ENCODE measurements at regions of chr6 and their contacts with region 1.

Region 1: DNA sequence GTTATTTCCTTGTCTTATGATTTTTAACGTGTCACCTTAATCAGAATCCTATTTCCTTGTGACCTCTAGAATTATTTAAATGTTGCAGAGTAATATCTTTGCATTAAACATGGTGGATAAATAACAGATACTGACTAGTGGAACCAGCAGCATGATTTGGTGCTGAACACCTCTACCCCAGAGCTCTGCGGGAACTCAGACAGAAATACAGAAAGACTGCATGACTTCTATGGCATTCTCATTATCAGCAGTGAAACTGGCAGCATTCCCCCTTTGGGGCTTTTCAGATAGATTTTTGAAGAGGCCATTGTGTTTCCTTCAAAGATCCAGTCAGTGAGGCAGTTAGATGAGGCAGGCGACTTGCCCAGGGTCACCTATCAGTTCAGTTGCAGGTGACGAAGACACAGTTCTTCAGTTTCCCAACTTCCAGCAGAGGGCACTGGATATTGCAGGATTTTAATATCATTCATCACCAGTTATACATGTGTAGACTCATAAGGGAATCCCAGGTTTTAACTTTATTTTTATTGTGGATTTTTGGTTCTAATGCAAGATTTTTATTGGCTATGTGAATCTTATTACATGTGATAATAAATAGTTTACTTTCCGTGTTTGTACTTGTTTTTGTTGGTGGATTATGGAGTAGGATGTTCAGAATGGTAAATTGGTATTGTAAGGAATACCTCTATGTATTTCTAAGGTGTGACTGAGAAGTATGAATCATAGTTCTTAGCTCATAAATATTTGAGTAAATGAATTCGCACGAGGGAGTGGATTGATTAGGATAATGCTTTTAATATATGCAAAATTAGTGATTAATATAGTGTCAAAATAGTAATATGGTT is 81.3 kb downstream of the AFDN start:
- DNase-seq: no peak
- ATAC-seq: no peak
- H3K4me3 ChIP-seq: no peak overlapping the region
- H3K27ac ChIP-seq: no peak overlapping the region
- H3K4me1 ChIP-seq: no peaks in the 10 kb centered on the region
- H3K27me3 ChIP-seq: no peaks in the 10 kb centered on the region

Region 2: DNA sequence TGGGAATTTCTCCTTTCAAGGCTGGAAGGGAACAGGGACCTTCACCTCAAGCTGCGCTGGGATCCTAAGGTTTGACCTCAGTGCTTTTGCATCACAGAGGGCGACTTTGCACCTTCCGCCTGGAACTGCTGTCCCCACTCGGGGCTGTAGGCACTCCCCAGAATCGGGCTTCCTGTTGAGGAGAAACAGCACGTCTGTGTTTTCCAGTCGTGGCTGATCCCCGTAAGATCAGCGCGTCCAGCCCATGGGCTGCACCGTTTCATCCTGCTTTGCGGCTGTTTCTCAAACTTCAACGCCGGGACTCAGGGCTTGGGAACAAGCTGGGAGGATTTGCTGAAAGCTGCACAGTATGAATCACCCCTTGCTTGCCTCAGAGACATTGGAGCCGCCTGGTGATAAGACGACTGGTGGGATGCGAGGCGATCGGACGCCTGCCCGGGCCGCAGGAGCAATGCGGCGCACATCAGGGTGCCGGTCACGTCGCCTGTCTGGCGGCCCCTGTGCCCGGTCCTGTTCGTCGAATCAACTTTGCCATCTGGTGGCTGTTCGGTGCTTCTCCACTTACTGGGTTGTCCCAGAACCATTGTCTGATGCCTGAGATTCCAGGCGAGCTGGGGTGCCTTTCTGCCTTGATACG is 224.6 kb after region 1 on chr6:
- intact Hi-C with region 1: loop called in 1 of 2 experiments (anchors 10 kb)
- DNase-seq: peak in 1 of 2 donors; percentile 85
- ATAC-seq: no peak
- H3K4me3 ChIP-seq: no peak overlapping the region
- H3K27ac ChIP-seq: no peak overlapping the region
- H3K4me1 ChIP-seq: peaks cover 0 to 2% of the 10 kb centered on the region in 2 donors
- H3K27me3 ChIP-seq: no peaks in the 10 kb centered on the region

Measured in aorta (tissue), 5 donors.